PC-3 (cell line): ENCODE measurements at regions of chr21 and their contacts with region 1.

Region 1: GRCh38 chr21:31316488-31317169 is 27.4 kb downstream of the TIAM1 start:
- DNase-seq: peak; percentile 91
- ATAC-seq: peak; percentile 99
- H3K4me3 ChIP-seq: no peak overlapping the region
- H3K27ac ChIP-seq: peak overlapping the region; percentile 67
- H3K4me1 ChIP-seq: peaks cover 19% of the 10 kb centered on the region
- H3K27me3 ChIP-seq: no peaks in the 10 kb centered on the region
- CTCF ChIP-seq: no peak

Region 2: DNA sequence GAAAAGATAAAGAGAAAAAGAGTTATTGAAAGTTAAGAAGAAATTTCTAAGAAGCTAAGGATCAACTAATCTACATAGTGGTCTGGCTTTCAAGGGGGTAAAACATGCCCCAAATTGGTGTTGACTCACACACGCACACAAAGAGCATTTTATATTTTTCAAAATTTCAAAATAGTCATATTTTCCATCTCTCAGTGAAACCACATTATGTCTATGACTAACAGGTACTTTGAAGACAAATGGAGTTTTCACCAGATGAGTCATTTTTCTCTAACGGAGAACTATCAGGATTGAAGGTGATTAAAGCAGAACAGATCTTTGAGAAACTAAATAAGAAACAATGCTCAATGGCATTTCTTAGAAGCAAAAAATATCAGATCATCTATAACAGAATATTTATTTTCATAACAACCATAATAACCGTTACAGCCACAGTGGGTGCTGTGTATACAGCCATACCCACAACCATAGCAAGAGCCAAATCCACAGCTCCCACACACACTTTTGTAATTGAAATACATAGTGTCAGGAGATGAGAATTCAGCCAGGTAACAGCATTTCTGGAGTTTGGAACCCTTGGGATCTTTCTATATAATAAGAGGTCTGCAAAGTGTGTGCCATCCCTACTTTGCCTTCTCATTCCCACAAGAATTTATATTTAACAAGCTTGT is 598.3 kb before region 1 on chr21 and contains the start of gene KRTAP21-3:
- CTCF ChIA-PET with region 1: no interaction called
- POLR2A ChIA-PET with region 1: no interaction called
- intact Hi-C with region 1: no loop called
- DNase-seq: peak; percentile 94
- ATAC-seq: peak; percentile 66
- H3K4me3 ChIP-seq: no peak within 1 kb of the TSS
- H3K27ac ChIP-seq: peak within 1 kb of the TSS; percentile 90
- H3K4me1 ChIP-seq: peaks cover 46% of the 10 kb centered on the region
- H3K27me3 ChIP-seq: no peaks in the 10 kb centered on the region
- CTCF ChIP-seq: no peak
- total RNA-seq, gene KRTAP21-3: not detected in 2 replicates

Region 3: GRCh38 chr21:31335957-31336738 is 19.5 kb after region 1 on chr21:
- CTCF ChIA-PET with region 1: no interaction called
- POLR2A ChIA-PET with region 1: no interaction called
- intact Hi-C with region 1: loop called (anchors 1 kb)
- DNase-seq: peak; percentile 96
- ATAC-seq: peak; percentile 96
- H3K4me3 ChIP-seq: peak overlapping the region; percentile 26; the same call in 1 of the 2 replicates
- H3K27ac ChIP-seq: peak overlapping the region; percentile 78
- H3K4me1 ChIP-seq: peaks cover 16% of the 10 kb centered on the region
- H3K27me3 ChIP-seq: no peaks in the 10 kb centered on the region
- CTCF ChIP-seq: no peak

Region 4: GRCh38 chr21:31347435-31348032 is 30.9 kb after region 1 on chr21:
- CTCF ChIA-PET with region 1: no interaction called
- POLR2A ChIA-PET with region 1: no interaction called
- intact Hi-C with region 1: no loop called
- DNase-seq: peak; percentile 84
- ATAC-seq: peak; percentile 25
- H3K4me3 ChIP-seq: peak overlapping the region; percentile 56
- H3K27ac ChIP-seq: no peak overlapping the region
- H3K4me1 ChIP-seq: peaks cover 43% of the 10 kb centered on the region
- H3K27me3 ChIP-seq: no peaks in the 10 kb centered on the region
- CTCF ChIP-seq: peak; percentile 83